ENCODE measurements at regions of chr7 and their contacts with region 1.

Region 1: GRCh38 chr7:2608921-2609411 is 22.8 kb upstream of the TTYH3 start:
- DNase-seq: no peak
- ATAC-seq: peak in 1 of 4 donors; percentile 3
- H3K4me3 ChIP-seq: peak overlapping the region in 1 of 12 donors; percentile 15
- H3K27ac ChIP-seq: peak overlapping the region in 4 of 12 donors; percentile 3 to 91 (median 58)
- H3K4me1 ChIP-seq: peaks cover 3 to 61% (median 39%) of the 10 kb centered on the region in 12 donors
- H3K27me3 ChIP-seq: no peaks in the 10 kb centered on the region
- CTCF ChIP-seq: peak in 6 of 12 donors; percentile 16 to 29 (median 20)
- POLR2A ChIP-seq: no peak

Region 2: GRCh38 chr7:2465928-2466327 is 143.0 kb before region 1 on chr7:
- intact Hi-C with region 1: no loop called
- DNase-seq: peak in 1 of 5 donors; percentile 14
- ATAC-seq: no peak
- H3K4me3 ChIP-seq: no peak overlapping the region
- H3K27ac ChIP-seq: no peak overlapping the region
- H3K4me1 ChIP-seq: peaks cover 0 to 9% (median under 1%) of the 10 kb centered on the region in 12 donors
- H3K27me3 ChIP-seq: peaks cover 0 to 6% (median 0%) of the 10 kb centered on the region in 9 donors
- CTCF ChIP-seq: no peak
- POLR2A ChIP-seq: no peak

Region 3: GRCh38 chr7:2626498-2627117 is 17.6 kb after region 1 on chr7:
- intact Hi-C with region 1: loop called in 1 of 10 experiments (anchors 2 kb)
- DNase-seq: peak in 4 of 5 donors; percentile 68 to 83 (median 78)
- ATAC-seq: peak; percentile 12 to 56 (median 24)
- H3K4me3 ChIP-seq: no peak overlapping the region
- H3K27ac ChIP-seq: peak overlapping the region; percentile 6 to 88 (median 58)
- H3K4me1 ChIP-seq: peaks cover 2 to 43% (median 23%) of the 10 kb centered on the region in 12 donors
- H3K27me3 ChIP-seq: no peaks in the 10 kb centered on the region
- CTCF ChIP-seq: no peak
- POLR2A ChIP-seq: no peak

Region 4: GRCh38 chr7:2641406-2642393 is 32.7 kb after region 1 on chr7:
- intact Hi-C with region 1: loop called in 4 of 10 experiments (anchors 5 kb)
- DNase-seq: peak; percentile 94 to 97 (median 95)
- ATAC-seq: peak; percentile 73 to 81 (median 79)
- H3K4me3 ChIP-seq: peak overlapping the region in 9 of 12 donors; percentile 23 to 46 (median 34)
- H3K27ac ChIP-seq: peak overlapping the region in 11 of 12 donors; percentile 69 to 87 (median 82)
- H3K4me1 ChIP-seq: peaks cover 18 to 84% (median 71%) of the 10 kb centered on the region in 12 donors
- H3K27me3 ChIP-seq: no peaks in the 10 kb centered on the region
- CTCF ChIP-seq: no peak
- POLR2A ChIP-seq: no peak

Region 5: GRCh38 chr7:2660585-2661408 is 51.8 kb after region 1 on chr7:
- intact Hi-C with region 1: loop called in 2 of 10 experiments (anchors 5 kb)
- DNase-seq: peak in 1 of 5 donors; percentile 67
- ATAC-seq: no peak
- H3K4me3 ChIP-seq: no peak overlapping the region
- H3K27ac ChIP-seq: no peak overlapping the region
- H3K4me1 ChIP-seq: peaks cover 0 to 34% (median 16%) of the 10 kb centered on the region in 12 donors
- H3K27me3 ChIP-seq: peaks cover 0 to 2% (median 0%) of the 10 kb centered on the region in 9 donors
- CTCF ChIP-seq: peak in 5 of 12 donors; percentile 6 to 25 (median 22)
- POLR2A ChIP-seq: no peak

Measured in heart left ventricle (tissue), 16 donors.